OCI-LY7 (cell line): ENCODE measurements at regions of chr3 and their contacts with region 1.

Region 1: DNA sequence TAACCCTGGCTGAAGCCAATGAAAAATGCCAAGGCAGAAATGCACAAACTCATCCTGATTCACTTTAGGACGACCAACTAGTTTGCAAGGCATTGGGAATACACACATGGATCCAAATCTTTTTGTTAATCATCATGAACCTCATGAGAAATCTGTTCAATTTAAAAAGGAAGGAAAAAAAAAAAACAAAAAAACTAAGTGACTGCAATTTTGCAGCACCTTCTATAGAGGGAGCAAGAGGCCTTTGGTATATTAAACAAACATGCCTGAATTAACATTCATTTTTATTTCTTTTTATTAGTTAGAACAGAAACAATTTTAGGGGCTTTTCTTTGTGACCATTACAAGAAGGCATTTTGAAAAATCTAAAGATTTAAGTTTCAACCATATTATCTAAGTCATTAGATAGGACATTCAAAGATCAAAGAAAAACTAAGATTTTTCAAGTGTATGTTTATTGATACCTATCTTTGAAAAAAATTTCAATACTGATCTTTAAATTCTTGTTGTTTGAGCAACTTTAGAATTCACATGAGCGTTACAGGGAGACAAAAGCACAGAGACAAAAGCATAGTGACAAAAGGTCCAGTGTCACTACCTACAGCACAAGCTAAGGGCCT is 182.4 kb downstream of the CBLB start:
- DNase-seq: peak; percentile 46
- H3K4me3 ChIP-seq: no peak overlapping the region
- H3K27ac ChIP-seq: no peak overlapping the region
- H3K4me1 ChIP-seq: no peaks in the 10 kb centered on the region
- CTCF ChIP-seq: peak; percentile 98

Region 2: GRCh38 chr3:105957722-105958618 is 271.6 kb after region 1 on chr3:
- CTCF ChIA-PET with region 1: no interaction called
- POLR2A ChIA-PET with region 1: no interaction called
- intact Hi-C with region 1: no loop called
- DNase-seq: no peak
- H3K4me3 ChIP-seq: no peak overlapping the region
- H3K27ac ChIP-seq: no peak overlapping the region
- H3K4me1 ChIP-seq: no peaks in the 10 kb centered on the region
- CTCF ChIP-seq: no peak

Region 3: GRCh38 chr3:106119614-106120082 is 433.3 kb after region 1 on chr3:
- CTCF ChIA-PET with region 1: no interaction called
- POLR2A ChIA-PET with region 1: no interaction called
- intact Hi-C with region 1: loop called (anchors 5 kb)
- DNase-seq: no peak
- H3K4me3 ChIP-seq: no peak overlapping the region
- H3K27ac ChIP-seq: no peak overlapping the region
- H3K4me1 ChIP-seq: no peaks in the 10 kb centered on the region
- CTCF ChIP-seq: no peak

Region 4: GRCh38 chr3:106609666-106610301 is 923.4 kb after region 1 on chr3:
- CTCF ChIA-PET with region 1: no interaction called
- POLR2A ChIA-PET with region 1: no interaction called
- intact Hi-C with region 1: loop called (anchors 5 kb)
- DNase-seq: peak; percentile 64
- H3K4me3 ChIP-seq: no peak overlapping the region
- H3K27ac ChIP-seq: no peak overlapping the region
- H3K4me1 ChIP-seq: no peaks in the 10 kb centered on the region
- CTCF ChIP-seq: peak; percentile 95